Adrenal gland (tissue), 19 donors: ENCODE measurements at regions of chr14 and their contacts with region 1.

Region 1: GRCh38 chr14:75906676-75907280 is 75.0 kb downstream of the TGFB3 start:
- DNase-seq: peak; percentile 58 to 88 (median 78)
- H3K4me3 ChIP-seq: no peak overlapping the region
- H3K27ac ChIP-seq: peak overlapping the region in 1 of 5 donors; percentile 54
- H3K4me1 ChIP-seq: no peaks in the 10 kb centered on the region
- H3K27me3 ChIP-seq: no peaks in the 10 kb centered on the region
- CTCF ChIP-seq: peak; percentile 76 to 98 (median 86)
- POLR2A ChIP-seq: no peak

Region 2: DNA sequence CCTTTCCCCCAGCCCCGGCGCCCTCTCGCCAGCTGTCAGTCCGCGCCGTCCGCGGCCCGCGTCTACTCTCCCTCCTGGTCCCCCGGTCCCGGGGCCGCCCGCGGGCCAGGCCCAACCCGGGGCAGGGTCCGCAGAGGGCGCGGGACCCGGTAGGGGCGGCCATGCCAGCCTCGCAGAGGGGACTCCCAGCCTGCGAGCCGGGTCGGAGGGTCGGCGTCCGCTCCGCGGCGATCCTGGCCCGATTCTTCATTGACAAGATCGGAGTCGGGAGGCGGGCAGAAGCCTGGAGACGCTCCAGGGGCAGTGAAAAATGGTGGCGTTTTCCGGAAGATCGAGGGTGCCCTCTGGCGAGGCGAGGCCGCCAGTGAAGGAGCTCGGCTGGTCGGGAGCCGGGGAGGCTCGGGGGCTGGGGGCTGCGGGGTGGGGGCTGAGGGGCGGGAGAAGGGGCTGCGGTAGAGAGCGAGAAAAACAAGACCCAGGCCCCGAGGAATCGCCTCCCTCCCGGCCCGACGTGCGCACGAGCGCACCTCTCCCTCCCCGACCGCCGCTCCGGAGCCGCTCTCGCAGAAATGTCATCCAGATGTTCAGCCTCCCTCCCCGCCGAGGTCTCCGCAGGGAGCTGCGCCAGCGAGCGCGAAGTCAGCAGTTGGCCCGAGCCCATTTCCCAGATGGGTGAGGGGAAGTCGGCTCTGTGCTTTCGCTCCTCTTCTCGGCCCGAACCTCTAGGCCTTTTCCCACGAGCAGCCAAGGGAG is 75.7 kb after region 1 on chr14:
- intact Hi-C with region 1: loop called (anchors 5 kb)
- DNase-seq: peak; percentile 82 to 92 (median 86)
- H3K4me3 ChIP-seq: peak overlapping the region in 3 of 4 donors; percentile 68 to 83 (median 72)
- H3K27ac ChIP-seq: peak overlapping the region; percentile 92 to 97 (median 94)
- H3K4me1 ChIP-seq: peaks cover 18 to 42% of the 10 kb centered on the region in 2 donors
- H3K27me3 ChIP-seq: no peaks in the 10 kb centered on the region
- CTCF ChIP-seq: peak in 5 of 6 experiments; percentile 43 to 66 (median 57)
- POLR2A ChIP-seq: no peak